Heart right ventricle (tissue), 16 donors: ENCODE measurements at regions of chr6 and their contacts with region 1.

Region 1: GRCh38 chr6:126804332-126805064 is 314.0 kb upstream of the RSPO3 start:
- DNase-seq: peak in 1 of 2 donors; percentile 13
- ATAC-seq: peak in 5 of 8 donors; percentile 37 to 65 (median 58)
- H3K4me3 ChIP-seq: no peak overlapping the region
- H3K27ac ChIP-seq: no peak overlapping the region
- H3K4me1 ChIP-seq: no peaks in the 10 kb centered on the region
- H3K27me3 ChIP-seq: peaks cover 0 to 26% (median 3%) of the 10 kb centered on the region in 7 donors
- CTCF ChIP-seq: peak; percentile 43 to 79 (median 71)

Region 2: DNA sequence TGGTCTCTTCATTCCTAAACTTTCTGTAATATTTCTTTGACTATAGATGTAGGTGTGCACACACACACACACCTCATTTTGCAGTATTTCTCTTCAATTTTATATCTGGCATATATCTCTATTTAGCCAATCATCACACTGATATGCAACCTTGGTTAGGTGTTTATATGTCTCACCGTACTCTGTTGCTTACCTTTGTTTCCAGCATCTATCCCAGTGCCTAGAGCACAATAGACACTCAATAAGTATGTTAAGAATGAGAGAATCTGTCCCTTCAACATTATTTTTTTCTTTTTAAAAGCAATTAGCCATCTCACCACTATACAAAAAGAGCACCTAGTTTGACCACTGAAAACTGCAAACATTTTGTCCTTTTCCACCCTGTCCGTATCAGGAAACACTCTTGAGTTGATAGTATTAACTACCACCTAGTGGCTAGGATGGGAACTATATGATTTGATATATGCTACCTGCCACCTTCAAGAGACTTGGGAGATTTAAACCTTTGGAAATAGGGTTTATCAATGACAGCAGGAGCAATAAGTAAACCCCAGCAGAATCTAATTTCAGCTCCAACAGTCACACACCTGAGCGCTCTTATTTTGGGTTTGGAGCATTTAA is 265.3 kb after region 1 on chr6:
- intact Hi-C with region 1: loop called in 1 of 10 experiments (anchors 10 kb)
- DNase-seq: no peak
- ATAC-seq: no peak
- H3K4me3 ChIP-seq: no peak overlapping the region
- H3K27ac ChIP-seq: no peak overlapping the region
- H3K4me1 ChIP-seq: no peaks in the 10 kb centered on the region
- H3K27me3 ChIP-seq: no peaks in the 10 kb centered on the region
- CTCF ChIP-seq: peak in 7 of 9 donors; percentile 30 to 47 (median 39)

Region 3: GRCh38 chr6:127100510-127101140 is 296.1 kb after region 1 on chr6:
- intact Hi-C with region 1: loop called in 1 of 10 experiments (anchors 10 kb)
- DNase-seq: no peak
- ATAC-seq: no peak
- H3K4me3 ChIP-seq: no peak overlapping the region
- H3K27ac ChIP-seq: no peak overlapping the region
- H3K4me1 ChIP-seq: peaks cover 0 to 10% (median 0%) of the 10 kb centered on the region in 9 donors
- H3K27me3 ChIP-seq: peaks cover 0 to 5% (median 0%) of the 10 kb centered on the region in 7 donors
- CTCF ChIP-seq: peak in 6 of 9 donors; percentile 28 to 48 (median 38)

Region 4: GRCh38 chr6:127120787-127121636 is 316.5 kb after region 1 on chr6:
- intact Hi-C with region 1: loop called in 8 of 10 experiments (anchors 5 to 10 kb)
- DNase-seq: peak; percentile 60 to 64
- ATAC-seq: peak; percentile 54 to 87 (median 83)
- H3K4me3 ChIP-seq: peak overlapping the region in 7 of 10 donors; percentile 31 to 60 (median 57)
- H3K27ac ChIP-seq: no peak overlapping the region
- H3K4me1 ChIP-seq: peaks cover 4 to 31% (median 25%) of the 10 kb centered on the region in 9 donors
- H3K27me3 ChIP-seq: peaks cover 10 to 96% (median 68%) of the 10 kb centered on the region in 7 donors
- CTCF ChIP-seq: peak in 8 of 9 donors; percentile 37 to 80 (median 72)

Region 5: GRCh38 chr6:127190552-127190951 is 386.1 kb after region 1 on chr6:
- intact Hi-C with region 1: loop called in 3 of 10 experiments (anchors 10 kb)
- DNase-seq: no peak
- ATAC-seq: no peak
- H3K4me3 ChIP-seq: no peak overlapping the region
- H3K27ac ChIP-seq: peak overlapping the region in 2 of 10 donors; percentile 56 to 65
- H3K4me1 ChIP-seq: peaks cover 0 to 18% (median 0%) of the 10 kb centered on the region in 9 donors
- H3K27me3 ChIP-seq: no peaks in the 10 kb centered on the region
- CTCF ChIP-seq: peak in 7 of 9 donors; percentile 47 to 67 (median 58)